ENCODE measurements at regions of chr6 and their contacts with region 1.

Region 1: GRCh38 chr6:13454286-13455221 is 32.8 kb downstream of the GFOD1 start:
- DNase-seq: peak; percentile 88

Region 2: DNA sequence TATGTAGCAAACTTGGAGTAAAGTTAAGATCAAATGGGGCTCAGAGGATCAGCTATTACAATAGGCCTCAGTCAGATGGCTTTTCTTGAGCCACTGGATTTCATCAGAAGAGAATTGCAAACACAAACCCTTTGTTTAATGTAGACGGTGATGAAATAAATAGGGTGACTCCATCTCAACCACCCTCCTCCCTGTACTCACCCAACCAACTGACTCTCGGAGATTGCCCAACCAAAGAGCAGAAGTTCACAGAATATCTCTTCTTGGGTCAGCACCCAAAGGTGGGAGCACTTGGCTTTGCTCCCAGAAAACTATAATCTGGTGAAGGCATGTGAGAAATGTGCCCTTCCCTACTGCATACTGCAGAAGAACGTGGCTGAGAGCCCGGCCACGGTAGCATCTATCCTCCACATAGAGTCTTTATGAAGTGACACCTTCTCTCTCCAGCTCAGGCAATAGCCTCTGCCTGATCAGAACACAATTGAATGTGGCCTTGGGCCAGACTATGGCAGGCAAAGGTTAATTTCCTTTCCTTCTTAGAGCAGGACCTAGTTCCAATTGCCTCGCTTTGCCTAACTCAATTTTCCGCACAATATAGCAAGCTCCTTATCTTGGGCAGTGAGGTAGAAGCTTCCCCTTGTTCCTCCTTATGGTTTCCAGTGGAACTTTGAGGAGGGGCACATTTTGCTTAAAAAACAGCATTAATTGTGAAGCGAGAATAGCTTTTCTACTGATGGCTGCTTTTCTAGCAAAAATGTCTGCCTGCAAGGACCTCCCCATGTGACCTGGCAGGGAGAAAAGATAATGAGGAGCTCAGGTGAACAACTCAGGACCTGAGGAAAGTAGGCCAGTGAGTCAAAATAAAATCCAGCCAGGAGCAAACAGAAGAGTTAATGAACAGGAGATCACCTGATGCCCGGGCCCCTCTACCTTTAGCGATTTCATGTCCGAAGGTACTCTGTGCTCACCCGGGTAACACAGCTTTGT is 46.6 kb before region 1 on chr6:
- intact Hi-C with region 1: loop called in 1 of 2 experiments (anchors 10 kb)
- DNase-seq: no peak

Region 3: GRCh38 chr6:13421425-13422059 is 33.0 kb before region 1 on chr6:
- intact Hi-C with region 1: loop called in 1 of 2 experiments (anchors 2 kb)
- DNase-seq: no peak